Activated CD4-positive, alpha-beta memory T cell treated with anti-CD3 and anti-CD28 coated beads for 36 hours (primary cell): ENCODE measurements at regions of chr1 and their contacts with region 1.

Region 1: GRCh38 chr1:205812878-205813754 is at the start of gene SLC41A1:
- DNase-seq: peak; percentile 94
- H3K4me3 Mint-ChIP-seq: peak within 1 kb of the TSS; percentile 89
- H3K27ac Mint-ChIP-seq: peak within 1 kb of the TSS; percentile 80
- H3K4me1 Mint-ChIP-seq: peaks cover 52% of the 10 kb centered on the region
- H3K27me3 Mint-ChIP-seq: no peaks in the 10 kb centered on the region
- total RNA-seq, gene SLC41A1: 34.9 to 35.0 TPM

Region 2: DNA sequence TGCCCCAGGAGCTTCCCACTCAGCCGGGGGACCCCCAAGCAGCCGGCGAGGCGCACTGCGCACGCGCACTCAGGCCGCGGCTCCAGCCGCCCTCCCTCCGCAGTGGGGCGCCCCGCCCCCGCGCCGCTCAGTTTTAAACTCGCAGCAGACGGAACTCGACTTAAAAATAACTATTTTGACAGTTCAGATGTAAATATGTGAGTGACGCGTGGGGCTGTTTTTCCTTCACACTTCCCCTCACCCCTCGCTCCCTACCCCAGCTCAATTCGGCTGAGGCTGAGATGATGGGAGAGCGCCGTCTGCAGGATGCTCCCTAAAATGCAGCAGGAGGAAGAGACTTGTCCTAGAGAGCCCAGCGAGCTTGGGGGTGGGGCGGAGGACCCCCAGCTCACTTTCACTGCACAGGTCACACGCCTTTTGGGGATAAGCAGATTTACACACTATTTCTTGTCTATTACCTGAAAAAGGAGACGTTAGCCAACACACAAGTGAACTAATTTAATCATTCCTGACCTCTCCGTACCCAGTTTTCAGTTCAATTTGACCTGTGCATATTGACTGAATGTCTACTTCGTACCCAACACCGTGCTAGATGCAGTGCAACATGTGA is 382.3 kb before region 1 on chr1:
- CTCF ChIA-PET with region 1: no interaction called
- POLR2A ChIA-PET with region 1: no interaction called
- intact Hi-C with region 1: no loop called
- DNase-seq: peak; percentile 73
- H3K4me3 Mint-ChIP-seq: peak overlapping the region; percentile 76
- H3K27ac Mint-ChIP-seq: no peak overlapping the region
- H3K4me1 Mint-ChIP-seq: peaks cover 10% of the 10 kb centered on the region
- H3K27me3 Mint-ChIP-seq: peaks cover 14% of the 10 kb centered on the region

Region 3: GRCh38 chr1:205739348-205740160 is 73.6 kb before region 1 on chr1:
- CTCF ChIA-PET with region 1: no interaction called
- POLR2A ChIA-PET with region 1: no interaction called
- intact Hi-C with region 1: no loop called
- DNase-seq: no peak
- H3K4me3 Mint-ChIP-seq: no peak overlapping the region
- H3K27ac Mint-ChIP-seq: no peak overlapping the region
- H3K4me1 Mint-ChIP-seq: peaks cover 43% of the 10 kb centered on the region
- H3K27me3 Mint-ChIP-seq: no peaks in the 10 kb centered on the region

Region 4: DNA sequence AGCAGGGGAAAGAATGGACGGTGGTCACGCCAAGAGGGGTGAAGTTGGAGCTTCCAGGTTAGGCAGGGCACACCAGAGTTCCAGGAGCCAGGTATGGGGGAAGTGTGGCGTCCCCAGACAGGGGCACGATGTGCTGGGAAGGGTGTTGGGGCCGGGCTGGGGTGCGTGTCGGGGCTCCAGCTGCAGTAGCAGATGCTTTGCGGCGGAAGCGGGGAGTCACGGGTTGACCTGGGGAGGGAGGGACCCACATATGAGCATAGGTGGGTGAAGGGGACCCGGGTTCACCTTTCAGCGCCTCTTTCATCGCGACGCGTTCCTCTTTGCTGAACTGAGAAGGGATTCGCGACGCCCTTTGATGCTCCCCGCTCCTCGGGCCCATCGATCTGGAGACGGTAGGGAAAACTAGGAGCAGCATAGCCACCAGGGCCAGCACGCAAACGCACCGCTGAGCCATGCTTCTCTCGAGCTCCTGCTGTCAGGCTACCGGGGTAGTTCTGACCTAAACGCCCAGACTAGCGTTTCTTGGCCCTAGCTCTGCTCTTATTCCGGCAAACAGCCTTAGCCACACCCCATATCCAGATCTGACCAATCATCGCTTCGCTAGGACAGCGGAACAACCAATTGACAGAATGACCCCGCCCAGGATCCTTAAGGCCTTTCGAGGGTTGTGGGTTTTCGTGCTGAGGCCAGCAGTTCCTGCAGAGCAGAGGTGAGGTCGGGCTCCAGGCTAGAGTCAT is 36.7 kb after region 1 on chr1 and contains the start of gene PM20D1:
- CTCF ChIA-PET with region 1: no interaction called
- POLR2A ChIA-PET with region 1: no interaction called
- intact Hi-C with region 1: loop called (anchors 5 kb)
- DNase-seq: peak; percentile 92
- H3K4me3 Mint-ChIP-seq: peak within 1 kb of the TSS; percentile 79
- H3K27ac Mint-ChIP-seq: peak within 1 kb of the TSS; percentile 61
- H3K4me1 Mint-ChIP-seq: peaks cover 21% of the 10 kb centered on the region
- H3K27me3 Mint-ChIP-seq: no peaks in the 10 kb centered on the region
- total RNA-seq, gene PM20D1: 0.29 to 0.55 TPM

Region 5: DNA sequence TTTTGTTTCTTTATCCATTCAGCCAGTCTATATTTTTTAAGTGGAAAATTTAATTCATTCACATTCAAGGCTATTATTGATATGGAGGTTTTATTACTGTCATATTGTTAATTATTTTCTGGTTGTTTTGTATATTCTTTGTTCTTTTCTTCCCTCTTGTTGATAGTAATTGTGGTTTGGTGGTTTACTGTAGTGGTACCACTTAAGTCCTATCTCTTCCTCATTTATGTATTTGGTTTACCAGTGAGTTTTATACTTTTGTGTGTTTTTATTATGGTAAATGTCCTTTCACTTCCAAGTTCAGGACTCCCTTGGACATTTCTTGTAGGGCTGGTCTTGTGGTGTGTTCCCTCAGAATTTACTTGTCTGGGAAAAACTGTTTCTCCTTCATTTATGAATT is 64.9 kb after region 1 on chr1:
- CTCF ChIA-PET with region 1: no interaction called
- POLR2A ChIA-PET with region 1: no interaction called
- intact Hi-C with region 1: no loop called
- DNase-seq: no peak
- H3K4me3 Mint-ChIP-seq: no peak overlapping the region
- H3K27ac Mint-ChIP-seq: no peak overlapping the region
- H3K4me1 Mint-ChIP-seq: no peaks in the 10 kb centered on the region
- H3K27me3 Mint-ChIP-seq: peaks cover 6% of the 10 kb centered on the region